Motor neuron (in vitro differentiated cells): ENCODE measurements at regions of chr7 and their contacts with region 1.

Region 1: DNA sequence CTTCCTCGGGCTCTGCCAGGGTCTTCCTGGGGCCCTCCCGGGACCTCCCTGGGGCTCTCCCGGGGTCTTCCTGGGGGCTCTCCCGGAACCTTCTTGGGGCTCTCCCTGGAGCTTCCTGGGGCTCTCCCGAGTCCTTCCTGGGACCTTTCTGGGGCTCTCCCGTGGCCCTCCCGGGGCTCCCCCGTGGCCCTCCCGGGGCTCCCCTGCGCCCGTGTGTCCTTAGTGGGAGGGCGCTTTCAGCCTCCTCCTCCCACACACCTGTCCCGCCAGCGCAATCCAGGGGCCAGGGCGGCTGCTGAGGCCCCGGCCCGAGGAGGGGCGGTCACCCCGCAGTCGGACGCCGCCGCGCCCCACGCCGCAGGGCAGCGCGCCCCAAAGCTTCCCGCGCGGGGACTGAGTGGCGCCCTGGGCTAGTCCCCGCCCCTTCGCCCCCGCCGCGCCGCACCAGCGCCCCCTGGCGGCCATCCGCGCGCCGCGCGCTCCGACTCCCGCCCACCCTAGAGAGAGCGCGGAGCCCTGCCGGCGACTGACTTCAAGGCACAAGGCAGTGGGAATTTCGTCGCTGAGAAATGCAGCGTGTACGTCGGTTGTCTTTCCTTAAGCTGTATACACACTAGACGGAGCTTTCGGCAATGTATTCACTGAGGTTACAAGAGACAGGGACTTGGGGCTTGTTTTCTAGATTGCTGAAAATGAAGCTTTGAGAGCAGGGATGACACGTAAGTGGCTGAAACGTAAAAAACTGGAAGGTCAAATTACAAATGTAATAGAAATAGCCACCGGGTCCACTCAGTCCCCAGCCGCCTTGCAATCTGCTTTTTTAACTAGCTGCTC is 47.1 kb downstream of the INSIG1 start:
- ATAC-seq: peak; percentile 97 to 99 (median 98)
- H3K4me3 ChIP-seq: peak overlapping the region; percentile 20 to 45 (median 34)
- H3K27ac ChIP-seq: no peak overlapping the region
- H3K4me1 ChIP-seq: peaks cover 0 to 4% of the 10 kb centered on the region in 2 donors

Region 2: GRCh38 chr7:154927624-154928143 is 417.1 kb before region 1 on chr7:
- in situ Hi-C with region 1: loop called in 5 of 9 experiments (anchors 10 to 25 kb)
- ATAC-seq: peak in 6 of 8 experiments; percentile 31 to 61 (median 47)
- H3K4me3 ChIP-seq: no peak overlapping the region
- H3K27ac ChIP-seq: no peak overlapping the region
- H3K4me1 ChIP-seq: no peaks in the 10 kb centered on the region

Region 3: DNA sequence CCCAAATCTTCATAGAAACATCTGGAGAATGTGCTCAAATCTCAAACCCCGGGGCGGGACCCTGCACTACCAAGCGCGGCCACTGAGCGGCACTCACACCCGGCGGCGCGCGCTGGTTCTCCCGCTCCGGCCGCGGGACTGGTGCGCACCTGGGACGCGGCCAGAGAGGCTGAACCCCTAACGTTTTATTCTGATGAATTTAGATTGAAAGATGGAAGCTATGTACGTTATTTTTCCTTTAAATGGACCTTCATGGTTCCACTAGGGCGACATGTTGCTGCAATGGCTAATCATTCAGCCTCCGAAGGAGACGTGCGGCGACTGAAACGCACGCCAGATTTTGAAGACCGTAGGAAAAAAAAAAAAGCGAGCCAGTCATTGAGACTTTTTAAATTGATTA is 154.1 kb before region 1 on chr7:
- in situ Hi-C with region 1: loop called in 1 of 9 experiments (anchors 10 kb)
- ATAC-seq: peak; percentile 35 to 81 (median 60)
- H3K4me3 ChIP-seq: peak overlapping the region in 2 of 5 donors; percentile 8 to 17
- H3K27ac ChIP-seq: no peak overlapping the region
- H3K4me1 ChIP-seq: peaks cover 8 to 12% of the 10 kb centered on the region in 2 donors